A549 (cell line): ENCODE measurements at regions of chr17 and their contacts with region 1.

Region 1: DNA sequence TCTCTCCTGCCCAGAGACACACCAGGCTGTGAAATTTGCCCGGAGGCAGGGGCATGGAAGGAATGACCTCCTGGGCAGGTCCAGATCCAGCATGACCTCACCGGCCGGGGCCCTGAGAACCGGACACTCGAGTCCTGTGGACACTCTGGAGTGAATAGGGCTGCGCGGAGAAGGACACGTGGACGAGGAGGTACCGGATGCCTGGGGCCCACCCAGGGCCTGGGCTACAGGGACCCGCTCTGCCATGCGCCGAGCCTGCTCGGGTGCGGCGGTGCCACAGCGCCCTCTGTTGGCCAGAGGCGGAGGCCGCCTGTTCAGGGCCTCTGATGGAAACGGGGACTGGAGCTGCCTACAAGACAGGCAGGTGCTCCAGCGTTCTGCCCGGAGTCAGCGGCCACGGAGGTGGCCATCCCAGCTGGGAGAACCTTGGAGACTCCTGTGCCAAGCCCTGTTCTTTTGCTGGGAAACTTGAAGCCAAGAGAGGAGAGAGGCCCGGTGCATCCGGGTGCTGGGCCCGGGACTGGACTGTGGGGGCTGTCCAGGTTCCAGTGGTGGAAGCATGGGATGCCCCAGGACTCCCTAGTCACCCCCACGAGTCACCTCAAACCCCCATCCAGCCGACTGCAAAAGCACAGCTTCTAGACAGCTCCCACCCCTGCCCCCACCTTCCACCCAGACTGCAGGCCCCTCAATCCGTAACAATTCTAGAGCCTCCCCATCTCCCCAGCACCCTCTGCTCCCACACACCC is 19.3 kb upstream of the NXPH3 start:
- DNase-seq: peak; percentile 82 to 94
- ATAC-seq: peak; percentile 89 to 98
- H3K4me3 ChIP-seq: no peak overlapping the region
- H3K27ac ChIP-seq: peak overlapping the region; percentile 46 to 64
- H3K4me1 ChIP-seq: 0 out of 3 replicates have a peak, but pooled peaks cover 3% of the 10 kb centered on the region
- CTCF ChIP-seq: peak; percentile 99
- EP300 ChIP-seq: no peak
- POLR2A ChIP-seq: no peak; the same call in 1 of the 2 replicates
- RAD21 ChIP-seq: peak; percentile 97 to 98

Region 2: DNA sequence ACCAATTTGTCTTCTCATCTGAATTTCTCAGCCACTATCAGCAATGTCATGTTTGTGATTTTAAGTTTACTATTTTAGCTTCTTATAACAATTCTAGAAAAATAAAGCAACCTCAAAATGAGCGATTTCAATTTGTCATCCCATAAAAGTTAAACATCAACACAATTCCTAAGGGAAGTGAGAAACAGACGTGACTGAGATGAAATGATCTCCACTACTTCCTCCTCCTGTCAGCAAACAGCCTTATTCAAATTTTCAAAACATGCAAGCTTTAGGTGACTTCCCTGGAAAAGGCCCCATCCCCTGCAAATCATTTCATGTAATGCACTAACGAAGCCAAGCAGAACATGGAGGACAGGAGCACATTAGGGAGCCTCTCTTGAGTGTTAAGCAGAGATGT is 259.3 kb before region 1 on chr17:
- CTCF ChIA-PET with region 1: interaction called, 10 read pairs
- POLR2A ChIA-PET with region 1: no interaction called
- DNase-seq: no peak
- ATAC-seq: no peak
- H3K4me3 ChIP-seq: no peak overlapping the region
- H3K27ac ChIP-seq: no peak overlapping the region
- H3K4me1 ChIP-seq: peaks cover 7% of the 10 kb centered on the region; the same call in 1 of the 3 replicates
- CTCF ChIP-seq: no peak
- EP300 ChIP-seq: no peak
- POLR2A ChIP-seq: no peak
- RAD21 ChIP-seq: no peak

Region 3: GRCh38 chr17:49381063-49381462 is 175.3 kb before region 1 on chr17:
- CTCF ChIA-PET with region 1: interaction called, 17 read pairs
- POLR2A ChIA-PET with region 1: no interaction called
- DNase-seq: no peak
- ATAC-seq: no peak
- H3K4me3 ChIP-seq: no peak overlapping the region
- H3K27ac ChIP-seq: no peak overlapping the region
- H3K4me1 ChIP-seq: no peaks in the 10 kb centered on the region
- CTCF ChIP-seq: no peak
- EP300 ChIP-seq: no peak
- POLR2A ChIP-seq: no peak
- RAD21 ChIP-seq: no peak

Region 4: GRCh38 chr17:49456183-49456965 is 100.0 kb before region 1 on chr17:
- CTCF ChIA-PET with region 1: interaction called, 121 read pairs
- POLR2A ChIA-PET with region 1: no interaction called
- DNase-seq: no peak
- ATAC-seq: 0 out of 6 replicates have a peak, but pooled peaks of 1 of the 2 experiments have one; percentile 14
- H3K4me3 ChIP-seq: no peak overlapping the region
- H3K27ac ChIP-seq: no peak overlapping the region
- H3K4me1 ChIP-seq: peaks cover 4% of the 10 kb centered on the region; the same call in 1 of the 3 replicates
- CTCF ChIP-seq: no peak
- EP300 ChIP-seq: no peak
- POLR2A ChIP-seq: no peak
- RAD21 ChIP-seq: no peak

Region 5: GRCh38 chr17:49523706-49524472 is 32.5 kb before region 1 on chr17:
- CTCF ChIA-PET with region 1: interaction called, 29 read pairs
- POLR2A ChIA-PET with region 1: no interaction called
- DNase-seq: no peak
- ATAC-seq: no peak
- H3K4me3 ChIP-seq: no peak overlapping the region
- H3K27ac ChIP-seq: no peak overlapping the region
- H3K4me1 ChIP-seq: no peaks in the 10 kb centered on the region
- CTCF ChIP-seq: no peak
- EP300 ChIP-seq: no peak
- POLR2A ChIP-seq: no peak
- RAD21 ChIP-seq: no peak

Region 6: GRCh38 chr17:49634485-49634860 is 78.1 kb after region 1 on chr17:
- CTCF ChIA-PET with region 1: interaction called, 12 read pairs
- POLR2A ChIA-PET with region 1: no interaction called
- DNase-seq: no peak
- ATAC-seq: no peak
- H3K4me3 ChIP-seq: no peak overlapping the region
- H3K27ac ChIP-seq: no peak overlapping the region
- H3K4me1 ChIP-seq: peaks cover 18% of the 10 kb centered on the region
- CTCF ChIP-seq: no peak
- EP300 ChIP-seq: no peak
- POLR2A ChIP-seq: no peak
- RAD21 ChIP-seq: no peak

Region 7: GRCh38 chr17:49763735-49764558 is 207.6 kb after region 1 on chr17 and contains the start of gene FAM117A:
- CTCF ChIA-PET with region 1: interaction called, 14 read pairs
- POLR2A ChIA-PET with region 1: no interaction called
- DNase-seq: peak; percentile 99 to 100
- ATAC-seq: peak; percentile 98 to 99
- H3K4me3 ChIP-seq: peak within 1 kb of the TSS; percentile 61
- H3K27ac ChIP-seq: peak within 1 kb of the TSS; percentile 57 to 89
- H3K4me1 ChIP-seq: peaks cover 9% of the 10 kb centered on the region
- CTCF ChIP-seq: no peak
- EP300 ChIP-seq: no peak
- POLR2A ChIP-seq: peak; percentile 44; the same call in 1 of the 2 replicates
- RAD21 ChIP-seq: no peak
- polyA plus RNA-seq, gene FAM117A: 1.8 TPM in 2 replicates

Region 8: DNA sequence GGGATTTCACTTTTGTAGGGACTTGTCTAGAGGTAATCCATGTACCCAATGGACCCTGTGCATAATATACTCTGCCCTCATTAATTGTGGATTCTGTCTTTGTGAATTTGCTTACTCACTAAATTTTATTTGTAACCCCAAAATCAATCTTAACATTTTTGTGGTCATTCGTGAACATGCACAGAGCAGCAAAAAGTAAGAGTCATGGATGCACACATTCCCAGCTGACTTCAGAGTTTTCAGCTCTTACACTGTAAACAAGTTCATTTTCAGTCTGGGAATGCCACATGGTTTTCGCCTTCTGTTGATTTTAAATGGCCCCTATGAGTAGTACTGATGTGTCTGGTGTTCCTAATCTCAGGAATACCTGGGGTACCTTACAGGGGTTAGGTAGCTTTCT is 267.2 kb after region 1 on chr17:
- CTCF ChIA-PET with region 1: no interaction called
- POLR2A ChIA-PET with region 1: no interaction called
- DNase-seq: no peak
- ATAC-seq: no peak
- H3K4me3 ChIP-seq: no peak overlapping the region
- H3K27ac ChIP-seq: no peak overlapping the region
- H3K4me1 ChIP-seq: peaks cover 8% of the 10 kb centered on the region
- CTCF ChIP-seq: no peak
- EP300 ChIP-seq: no peak
- POLR2A ChIP-seq: no peak
- RAD21 ChIP-seq: no peak